ENCODE measurements at regions of chr12 and their contacts with region 1.

Region 1: DNA sequence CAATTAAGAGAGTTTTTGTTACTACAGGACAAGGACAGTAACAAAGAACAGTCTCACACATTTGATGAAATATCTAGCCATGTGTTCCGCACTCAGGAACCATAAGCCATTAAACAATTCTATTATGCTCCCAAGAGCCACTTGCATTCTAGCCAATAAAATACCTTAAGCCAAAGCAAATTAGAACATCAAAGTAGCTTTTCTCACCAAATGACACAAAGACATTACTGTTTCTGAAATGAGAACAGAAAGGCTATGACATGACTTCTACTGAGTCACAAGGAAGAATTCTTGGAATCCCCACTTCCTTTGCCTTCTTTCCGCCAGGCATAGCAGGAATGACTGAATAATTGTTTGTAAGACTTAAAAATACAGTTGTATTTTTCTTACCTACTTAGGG is 445.8 kb downstream of the ATP23 start:
- DNase-seq: peak; percentile 81
- H3K4me3 ChIP-seq: no peak overlapping the region
- H3K27ac ChIP-seq: peak overlapping the region; percentile 21
- H3K4me1 ChIP-seq: peaks cover 21% of the 10 kb centered on the region
- H3K27me3 ChIP-seq: no peaks in the 10 kb centered on the region
- CTCF ChIP-seq: no peak

Region 2: GRCh38 chr12:57153415-57153997 is 1233.7 kb before region 1 on chr12:
- CTCF ChIA-PET with region 1: interaction called, 13 read pairs
- dilution Hi-C with region 1: no loop called
- in situ Hi-C with region 1: no loop called
- intact Hi-C with region 1: no loop called
- DNase-seq: no peak
- H3K4me3 ChIP-seq: no peak overlapping the region
- H3K27ac ChIP-seq: no peak overlapping the region
- H3K4me1 ChIP-seq: peaks cover 27% of the 10 kb centered on the region
- H3K27me3 ChIP-seq: no peaks in the 10 kb centered on the region
- CTCF ChIP-seq: no peak

Measured in mammary epithelial cell (primary cell).